Activated CD8-positive, alpha-beta T cell treated with anti-CD3 and anti-CD28 coated beads, Interleukin-2, amount 10 ng/mL, durations not matched to agents 7 days and 5 days (primary cell): ENCODE measurements at regions of chr2 and their contacts with region 1.

Region 1: GRCh38 chr2:136281281-136282114 is 163.5 kb upstream of the CXCR4 start:
- DNase-seq: peak; percentile 52
- ATAC-seq: peak; percentile 85
- H3K4me3 Mint-ChIP-seq: peak overlapping the region; percentile 14
- H3K27ac Mint-ChIP-seq: peak overlapping the region; percentile 85
- H3K4me1 Mint-ChIP-seq: peaks cover 48% of the 10 kb centered on the region
- H3K27me3 Mint-ChIP-seq: no peaks in the 10 kb centered on the region

Region 2: DNA sequence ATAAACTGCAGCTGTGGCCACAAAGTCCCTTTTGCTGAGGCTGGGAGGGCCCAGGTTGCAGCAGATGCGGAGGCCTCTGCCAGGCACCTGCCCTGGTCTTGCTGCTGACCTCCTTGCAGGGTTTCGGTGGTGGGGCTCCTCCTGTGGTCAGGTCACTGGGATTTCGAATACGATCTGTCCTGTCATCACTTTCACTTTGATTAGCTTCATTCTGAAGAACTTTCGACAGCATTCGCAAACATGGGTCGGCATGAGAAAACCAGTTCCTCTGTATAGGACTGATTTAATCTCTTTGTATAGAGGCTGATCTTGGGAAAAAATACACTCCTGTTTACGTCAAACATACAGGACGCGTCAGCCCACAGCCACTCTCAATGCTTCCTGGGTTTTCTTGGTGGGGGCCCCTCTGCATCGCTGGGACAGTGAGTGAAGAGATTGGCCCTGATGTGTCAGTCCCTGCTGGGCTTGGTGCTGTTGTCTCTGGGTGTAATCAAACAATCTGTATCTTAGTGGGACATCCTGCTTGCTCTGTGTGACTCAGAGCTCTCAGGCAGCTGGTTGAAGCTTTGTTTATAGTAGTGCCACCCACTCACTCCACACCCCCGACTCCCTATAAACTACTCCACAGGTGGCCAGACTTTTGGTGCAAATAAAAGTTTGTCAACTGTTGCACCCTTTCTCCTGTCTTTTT is 45.8 kb after region 1 on chr2:
- CTCF ChIA-PET with region 1: interaction called, 4 read pairs
- POLR2A ChIA-PET with region 1: interaction called, 11 read pairs
- DNase-seq: peak; percentile 78
- ATAC-seq: peak; percentile 97
- H3K4me3 Mint-ChIP-seq: peak overlapping the region; percentile 77
- H3K27ac Mint-ChIP-seq: peak overlapping the region; percentile 97
- H3K4me1 Mint-ChIP-seq: peaks cover 43% of the 10 kb centered on the region
- H3K27me3 Mint-ChIP-seq: peaks cover 2% of the 10 kb centered on the region